Head of caudate nucleus (tissue), 42 donors: ENCODE measurements at regions of chr14 and their contacts with region 1.

Region 1: GRCh38 chr14:24093901-24094761 is at the start of gene PCK2:
- DNase-seq: peak; percentile 39 to 90 (median 77)

Region 2: DNA sequence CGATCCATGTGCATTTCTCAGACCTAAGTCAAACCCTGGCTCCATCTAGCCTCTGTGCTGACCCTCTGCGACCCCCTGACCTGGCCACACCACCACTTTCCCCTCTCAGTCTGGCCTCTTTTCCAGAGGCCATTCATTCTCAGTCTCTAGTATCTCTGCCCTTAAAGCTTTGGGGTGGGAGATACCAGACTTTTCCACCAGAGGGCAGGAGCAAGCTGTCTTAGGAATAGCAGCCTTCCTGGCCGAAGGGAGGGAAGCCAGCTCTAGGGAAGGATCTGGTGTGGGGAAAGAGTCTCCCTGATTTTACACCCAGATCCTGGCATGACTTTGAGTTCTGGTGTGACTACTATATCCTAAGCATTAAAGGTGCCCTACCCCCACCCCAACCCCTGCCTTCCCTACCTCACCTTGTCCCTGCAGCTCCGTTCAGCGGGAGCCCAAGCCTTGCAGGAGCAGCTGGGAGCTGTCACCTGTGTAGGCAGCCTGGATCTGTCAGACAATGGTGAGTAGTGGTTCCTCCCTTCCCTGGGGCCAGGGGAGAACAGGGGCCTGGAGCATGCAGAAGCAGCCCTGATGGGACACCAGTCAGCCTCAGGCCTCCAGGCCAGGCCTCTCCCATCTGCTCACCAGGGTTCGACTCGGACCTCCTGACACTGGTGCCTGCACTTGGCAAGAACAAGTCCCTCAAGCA is 35.7 kb before region 1 on chr14:
- intact Hi-C with region 1: loop called (anchors 5 kb)
- DNase-seq: peak in 38 of 42 donors; percentile 27 to 93 (median 79)